HCT116 (cell line): ENCODE measurements at regions of chr18 and their contacts with region 1.

Region 1: GRCh38 chr18:3652380-3653262 is 202.6 kb downstream of the TGIF1 start:
- DNase-seq: peak; percentile 98
- ATAC-seq: peak; percentile 72
- H3K4me3 ChIP-seq: peak overlapping the region; percentile 39 to 52
- H3K27ac ChIP-seq: peak overlapping the region; percentile 96
- H3K4me1 ChIP-seq: peaks cover 92 to 93% of the 10 kb centered on the region in 2 experiments
- H3K27me3 ChIP-seq: no peaks in the 10 kb centered on the region
- CTCF ChIP-seq: peak in 2 of 3 experiments; percentile 7 to 13; a peak in 1 of 6 replicates
- POLR2A ChIP-seq: no peak
- RAD21 ChIP-seq: no peak

Region 2: DNA sequence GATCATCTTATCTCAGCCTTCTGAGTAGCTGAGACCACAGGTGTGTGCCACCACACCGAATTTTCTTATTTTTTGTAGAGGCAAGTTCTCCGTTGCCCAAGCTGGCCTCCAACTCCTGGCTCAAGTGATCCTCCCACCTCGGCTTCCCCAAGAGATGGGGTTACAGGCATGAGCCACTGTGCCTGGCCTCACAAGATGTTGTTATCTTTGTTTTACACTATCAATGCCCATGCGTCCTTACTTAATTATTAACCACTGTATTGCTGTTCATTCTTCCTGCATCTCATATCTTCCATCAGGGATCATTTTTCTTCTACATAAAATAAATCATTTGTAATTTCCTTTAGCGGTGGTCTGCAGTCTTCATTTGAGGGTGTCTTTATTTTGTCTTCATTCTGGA is 20.7 kb before region 1 on chr18:
- CTCF ChIA-PET with region 1: no interaction called
- POLR2A ChIA-PET with region 1: interaction called, 266 read pairs
- RAD21 ChIA-PET with region 1: interaction called in 1 of 2 experiments, 4 read pairs
- intact Hi-C with region 1: no loop called
- DNase-seq: no peak
- ATAC-seq: no peak
- H3K4me3 ChIP-seq: no peak overlapping the region
- H3K27ac ChIP-seq: peak overlapping the region; percentile 13; the same call in 1 of the 2 replicates
- H3K4me1 ChIP-seq: peaks cover 57 to 74% of the 10 kb centered on the region in 2 experiments
- H3K27me3 ChIP-seq: no peaks in the 10 kb centered on the region
- CTCF ChIP-seq: no peak
- POLR2A ChIP-seq: no peak
- RAD21 ChIP-seq: no peak